ENCODE measurements at regions of chr5 and their contacts with region 1.

Region 1: DNA sequence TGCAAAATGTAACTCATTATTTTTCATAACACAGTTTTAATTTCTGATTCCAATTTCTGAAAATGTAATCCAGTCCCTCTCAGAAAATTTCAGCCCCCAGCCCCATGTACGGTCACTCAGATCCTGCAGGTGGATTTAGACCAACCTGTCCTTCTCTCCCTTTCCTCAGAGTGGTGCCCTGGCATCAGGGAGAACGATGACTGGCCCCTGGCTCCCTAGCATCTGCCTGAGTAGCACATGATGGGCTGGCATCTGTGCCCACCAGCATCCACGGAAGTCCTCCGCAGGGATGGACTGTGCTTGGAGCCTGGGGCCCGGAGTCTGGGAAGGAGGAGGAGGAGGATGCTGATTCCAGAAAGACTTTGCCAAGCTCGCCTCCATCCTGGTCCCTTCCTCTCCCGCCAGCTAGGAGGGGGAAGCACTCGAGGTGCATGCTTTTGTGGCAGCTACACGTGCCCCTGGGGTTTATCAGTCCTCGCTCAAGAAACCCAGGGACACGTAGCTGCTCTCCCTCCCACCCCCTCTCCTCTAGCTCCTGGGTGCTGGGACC is 54.4 kb upstream of the RUFY1 start:
- DNase-seq: no peak
- H3K4me3 ChIP-seq: no peak overlapping the region
- H3K4me3 Mint-ChIP-seq: no peak overlapping the region
- H3K27ac ChIP-seq: no peak overlapping the region
- H3K27ac Mint-ChIP-seq: no peak overlapping the region
- H3K4me1 ChIP-seq: no peaks in the 10 kb centered on the region
- H3K4me1 Mint-ChIP-seq: no peaks in the 10 kb centered on the region
- H3K27me3 ChIP-seq: no peaks in the 10 kb centered on the region
- H3K27me3 Mint-ChIP-seq: peaks cover 3 to 7% of the 10 kb centered on the region in 2 donors

Region 2: GRCh38 chr5:179166886-179167841 is 328.8 kb before region 1 on chr5:
- CTCF ChIA-PET with region 1: interaction called, 12 read pairs
- POLR2A ChIA-PET with region 1: no interaction called
- intact Hi-C with region 1: no loop called
- DNase-seq: peak in 4 of 5 donors; percentile 39 to 59 (median 47)
- H3K4me3 ChIP-seq: peak overlapping the region in 1 of 2 donors; percentile 5
- H3K4me3 Mint-ChIP-seq: peak overlapping the region in 7 of 8 donors; percentile 12 to 72 (median 38)
- H3K27ac ChIP-seq: no peak overlapping the region
- H3K27ac Mint-ChIP-seq: no peak overlapping the region
- H3K4me1 ChIP-seq: peaks cover 4% of the 10 kb centered on the region
- H3K4me1 Mint-ChIP-seq: peaks cover 0 to 8% (median 1%) of the 10 kb centered on the region in 4 donors
- H3K27me3 ChIP-seq: no peaks in the 10 kb centered on the region
- H3K27me3 Mint-ChIP-seq: peaks cover 8 to 10% of the 10 kb centered on the region in 2 donors

Measured in CD4-positive, alpha-beta memory T cell (primary cell).